Mammary epithelial cell (primary cell): ENCODE measurements at regions of chr11 and their contacts with region 1.

Region 1: GRCh38 chr11:100190395-100190794 is 496.7 kb upstream of the ARHGAP42 start:
- DNase-seq: no peak
- H3K4me3 ChIP-seq: no peak overlapping the region
- H3K27ac ChIP-seq: no peak overlapping the region
- H3K4me1 ChIP-seq: no peaks in the 10 kb centered on the region
- H3K27me3 ChIP-seq: no peaks in the 10 kb centered on the region
- CTCF ChIP-seq: no peak

Region 2: DNA sequence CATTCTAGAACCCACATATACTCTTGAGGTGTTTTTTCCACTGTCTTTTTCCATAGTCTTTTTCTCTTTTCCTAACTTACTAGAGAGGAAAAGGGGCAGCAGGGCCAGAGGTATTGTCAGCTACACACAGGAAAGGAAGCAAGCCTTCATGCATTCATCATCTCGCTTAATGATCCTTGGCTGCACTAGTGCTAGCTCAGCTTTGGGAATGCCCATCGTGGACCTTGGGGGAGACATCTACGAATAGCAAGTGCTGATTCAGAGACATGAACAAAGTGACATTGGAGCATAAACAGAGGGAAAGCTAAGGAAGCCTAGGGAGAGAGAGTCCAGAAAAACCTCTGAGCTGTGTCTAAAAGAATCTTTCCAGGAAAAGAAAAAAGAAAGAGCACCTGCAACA is 30.4 kb after region 1 on chr11:
- CTCF ChIA-PET with region 1: no interaction called
- dilution Hi-C with region 1: no loop called
- in situ Hi-C with region 1: no loop called
- intact Hi-C with region 1: loop called (anchors 1 kb)
- DNase-seq: no peak
- H3K4me3 ChIP-seq: no peak overlapping the region
- H3K27ac ChIP-seq: no peak overlapping the region
- H3K4me1 ChIP-seq: no peaks in the 10 kb centered on the region
- H3K27me3 ChIP-seq: no peaks in the 10 kb centered on the region
- CTCF ChIP-seq: no peak

Region 3: DNA sequence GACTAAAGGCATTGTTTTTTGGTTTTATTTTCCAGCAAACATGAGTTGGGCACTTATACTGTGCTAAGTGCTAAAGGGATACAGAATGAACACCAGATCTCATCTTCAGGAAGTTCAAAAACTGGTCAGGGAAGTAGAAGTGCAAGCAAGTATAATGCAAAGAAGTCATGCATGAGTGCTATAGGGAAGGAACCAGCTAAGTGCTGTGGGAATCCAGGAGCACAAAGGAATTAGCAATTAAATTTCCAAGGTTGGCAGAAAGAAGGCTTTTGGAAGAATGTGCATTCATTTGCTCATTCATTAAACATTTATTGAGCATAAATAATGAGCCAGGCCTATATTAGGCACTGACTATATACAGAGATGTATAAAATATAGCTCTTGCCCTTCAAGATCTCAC is 353.0 kb after region 1 on chr11:
- CTCF ChIA-PET with region 1: no interaction called
- dilution Hi-C with region 1: no loop called
- in situ Hi-C with region 1: no loop called
- intact Hi-C with region 1: no loop called
- DNase-seq: no peak
- H3K4me3 ChIP-seq: no peak overlapping the region
- H3K27ac ChIP-seq: no peak overlapping the region
- H3K4me1 ChIP-seq: peaks cover 10% of the 10 kb centered on the region
- H3K27me3 ChIP-seq: no peaks in the 10 kb centered on the region
- CTCF ChIP-seq: no peak